Ascending aorta (tissue), 2 donors: ENCODE measurements at regions of chr7 and their contacts with region 1.

Region 1: DNA sequence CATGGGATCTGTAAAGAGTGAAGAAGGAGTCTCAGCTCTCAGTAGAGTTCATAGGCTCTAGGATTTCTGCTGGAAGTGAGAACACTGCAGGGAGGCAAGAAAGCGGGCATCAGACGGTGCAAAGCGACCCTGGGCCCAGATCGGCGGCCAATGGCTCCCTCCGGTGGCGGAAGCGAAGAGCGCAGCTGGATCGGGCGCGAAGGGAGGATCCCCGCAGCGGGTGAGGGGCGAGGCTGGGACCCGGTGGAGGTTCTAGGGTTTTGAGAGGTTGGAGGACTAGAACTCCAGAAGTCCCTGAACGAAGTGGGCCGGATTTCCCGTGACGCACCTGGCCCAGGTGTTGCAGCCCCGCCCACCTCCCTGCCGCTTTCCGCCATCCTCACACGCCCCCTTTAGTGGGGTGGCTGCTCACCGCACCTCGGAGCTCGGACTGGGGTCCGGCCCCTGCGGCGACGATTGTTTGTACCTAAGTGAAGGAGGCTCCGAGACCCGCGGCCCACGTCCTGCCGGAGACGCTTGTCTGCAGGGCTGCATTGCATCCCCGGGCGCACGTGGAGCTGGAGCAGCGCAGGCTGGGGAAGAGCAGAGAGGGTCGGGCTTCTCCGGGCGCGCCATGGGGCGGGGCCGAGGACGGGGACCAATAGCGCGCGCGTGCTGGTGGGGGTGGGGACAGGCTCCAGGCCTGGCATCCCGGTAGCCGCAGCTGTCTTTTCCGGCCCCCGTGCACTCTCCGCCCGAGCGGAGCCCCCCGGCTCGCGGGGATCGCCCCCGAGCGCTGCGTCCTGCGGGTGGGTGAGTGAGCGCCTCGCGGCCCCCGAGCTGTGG is at the start of gene SLC12A9:
- DNase-seq: peak; percentile 55 to 93
- H3K4me3 ChIP-seq: peak within 1 kb of the TSS; percentile 69 to 82
- H3K27ac ChIP-seq: peak within 1 kb of the TSS; percentile 77 to 85
- H3K4me1 ChIP-seq: peaks cover 3 to 8% of the 10 kb centered on the region in 2 donors
- H3K27me3 ChIP-seq: no peaks in the 10 kb centered on the region
- CTCF ChIP-seq: peak; percentile 90 to 93 (median 90)
- total RNA-seq, gene SLC12A9: 19.4 TPM

Region 2: DNA sequence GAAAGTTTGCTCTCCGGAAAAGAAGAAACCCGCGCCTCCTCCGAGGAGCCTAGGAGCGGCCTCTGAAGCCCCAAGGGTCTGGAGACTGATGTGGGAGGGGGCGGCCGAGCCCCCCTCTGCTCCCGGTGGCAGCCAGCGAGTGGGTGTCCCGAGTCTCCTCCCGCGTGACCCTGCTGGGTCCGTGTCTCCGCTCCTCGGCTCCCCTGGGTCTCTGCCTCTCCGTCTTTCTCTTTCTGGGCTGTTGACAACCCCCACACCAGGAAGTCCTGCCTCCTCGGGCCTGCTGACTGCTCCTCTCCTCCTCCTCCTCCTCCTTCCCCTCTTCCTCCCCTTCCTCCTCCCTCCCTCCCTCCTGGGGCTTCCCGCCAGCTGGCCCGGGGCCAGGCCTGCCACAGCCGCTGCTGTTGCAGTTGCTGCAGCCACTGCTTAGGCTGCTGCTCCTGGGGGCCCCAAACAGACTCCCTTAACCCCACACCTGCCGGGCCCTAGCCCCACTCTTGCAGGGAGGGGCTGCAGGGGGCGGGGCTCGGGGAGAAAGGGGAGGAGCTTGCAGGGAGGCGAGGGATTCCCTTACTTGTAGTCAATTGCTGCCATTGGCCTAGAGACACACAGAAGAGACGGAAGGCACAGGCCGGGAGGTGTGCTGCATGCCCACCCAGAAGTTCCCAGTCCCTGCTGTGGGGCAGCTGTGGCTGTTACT is 373.1 kb before region 1 on chr7 and contains the start of gene TSC22D4:
- intact Hi-C with region 1: loop called (anchors 5 kb)
- DNase-seq: peak; percentile 77 to 95
- H3K4me3 ChIP-seq: peak within 1 kb of the TSS; percentile 90 to 92
- H3K27ac ChIP-seq: peak within 1 kb of the TSS; percentile 85 to 87
- H3K4me1 ChIP-seq: peaks cover 25 to 39% of the 10 kb centered on the region in 2 donors
- H3K27me3 ChIP-seq: no peaks in the 10 kb centered on the region
- CTCF ChIP-seq: no peak
- total RNA-seq, gene TSC22D4: 68.2 TPM

Region 3: GRCh38 chr7:100545360-100546128 is 306.7 kb before region 1 on chr7:
- intact Hi-C with region 1: loop called (anchors 10 kb)
- DNase-seq: peak; percentile 59 to 91
- H3K4me3 ChIP-seq: peak overlapping the region; percentile 11 to 14
- H3K27ac ChIP-seq: peak overlapping the region; percentile 91 to 94
- H3K4me1 ChIP-seq: peaks cover 28 to 46% of the 10 kb centered on the region in 2 donors
- H3K27me3 ChIP-seq: no peaks in the 10 kb centered on the region
- CTCF ChIP-seq: peak in 1 of 3 experiments; percentile 3

Region 4: GRCh38 chr7:100726996-100727761 is 125.1 kb before region 1 on chr7:
- intact Hi-C with region 1: loop called (anchors 5 kb)
- DNase-seq: no peak
- H3K4me3 ChIP-seq: no peak overlapping the region
- H3K27ac ChIP-seq: no peak overlapping the region
- H3K4me1 ChIP-seq: no peaks in the 10 kb centered on the region
- H3K27me3 ChIP-seq: no peaks in the 10 kb centered on the region
- CTCF ChIP-seq: no peak

Region 5: GRCh38 chr7:100799014-100799896 is 53.0 kb before region 1 on chr7:
- intact Hi-C with region 1: loop called (anchors 1 kb)
- DNase-seq: no peak
- H3K4me3 ChIP-seq: no peak overlapping the region
- H3K27ac ChIP-seq: no peak overlapping the region
- H3K4me1 ChIP-seq: no peaks in the 10 kb centered on the region
- H3K27me3 ChIP-seq: no peaks in the 10 kb centered on the region
- CTCF ChIP-seq: peak; percentile 44 to 60 (median 52)

Region 6: GRCh38 chr7:100837099-100837836 is 15.0 kb before region 1 on chr7:
- intact Hi-C with region 1: loop called (anchors 2 kb)
- DNase-seq: peak; percentile 56 to 93
- H3K4me3 ChIP-seq: peak overlapping the region; percentile 35 to 55
- H3K27ac ChIP-seq: peak overlapping the region; percentile 48 to 62
- H3K4me1 ChIP-seq: peaks cover 0 to 3% of the 10 kb centered on the region in 2 donors
- H3K27me3 ChIP-seq: no peaks in the 10 kb centered on the region
- CTCF ChIP-seq: no peak

Region 7: DNA sequence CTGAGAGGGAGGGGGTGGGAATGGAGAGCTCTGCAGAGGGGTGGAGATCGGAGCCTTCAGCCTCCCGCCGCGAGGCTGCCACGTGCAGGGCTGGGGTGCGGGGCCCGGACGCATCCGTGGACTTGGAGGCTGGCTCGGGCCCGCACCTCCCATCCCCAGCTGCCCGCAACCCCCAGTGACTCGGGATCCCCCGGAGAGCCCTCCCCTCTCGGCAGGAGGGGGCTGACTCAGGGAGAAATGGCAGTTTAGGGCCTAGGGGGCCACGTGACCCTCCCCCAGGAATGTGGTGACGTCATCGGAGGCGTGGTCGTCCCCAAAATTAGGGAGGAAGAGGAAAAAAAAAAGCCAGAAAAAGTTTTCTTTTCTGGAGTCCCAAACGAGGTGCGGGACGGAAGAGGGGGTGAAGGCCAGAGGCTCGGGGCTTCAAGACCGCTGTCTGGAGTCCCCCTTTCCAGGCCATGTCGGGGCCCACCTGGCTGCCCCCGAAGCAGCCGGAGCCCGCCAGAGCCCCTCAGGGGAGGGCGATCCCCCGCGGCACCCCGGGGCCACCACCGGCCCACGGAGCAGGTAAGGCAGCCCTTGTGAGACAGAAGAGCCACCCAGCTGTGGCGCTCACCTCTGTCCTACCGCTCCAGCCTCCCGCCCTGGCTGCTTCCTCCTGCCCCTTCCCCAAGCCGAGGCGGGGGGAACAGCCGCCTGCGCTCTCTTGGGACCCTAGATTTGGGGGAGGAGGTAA is 14.9 kb after region 1 on chr7 and contains the start of gene TRIP6:
- intact Hi-C with region 1: loop called (anchors 1 kb)
- DNase-seq: peak; percentile 71 to 96
- H3K4me3 ChIP-seq: peak within 1 kb of the TSS; percentile 94 to 95
- H3K27ac ChIP-seq: peak within 1 kb of the TSS; percentile 99
- H3K4me1 ChIP-seq: peaks cover 17 to 23% of the 10 kb centered on the region in 2 donors
- H3K27me3 ChIP-seq: no peaks in the 10 kb centered on the region
- CTCF ChIP-seq: no peak
- total RNA-seq, gene TRIP6: 221 TPM